PC-3 (cell line): ENCODE measurements at regions of chr10 and their contacts with region 1.

Region 1: GRCh38 chr10:28241741-28242399 is 61.0 kb downstream of the MPP7 start:
- DNase-seq: peak; percentile 76
- ATAC-seq: peak; percentile 92
- H3K4me3 ChIP-seq: no peak overlapping the region
- H3K27ac ChIP-seq: no peak overlapping the region
- H3K4me1 ChIP-seq: peaks cover 14% of the 10 kb centered on the region
- H3K27me3 ChIP-seq: no peaks in the 10 kb centered on the region
- CTCF ChIP-seq: peak; percentile 89

Region 2: GRCh38 chr10:27742195-27743011 is 499.5 kb before region 1 on chr10:
- CTCF ChIA-PET with region 1: no interaction called
- POLR2A ChIA-PET with region 1: no interaction called
- intact Hi-C with region 1: loop called (anchors 5 kb)
- DNase-seq: peak; percentile 75
- ATAC-seq: peak; percentile 48
- H3K4me3 ChIP-seq: peak overlapping the region; percentile 86
- H3K27ac ChIP-seq: peak overlapping the region; percentile 68
- H3K4me1 ChIP-seq: peaks cover 16% of the 10 kb centered on the region; the same call in 1 of the 2 replicates
- H3K27me3 ChIP-seq: peaks cover 16% of the 10 kb centered on the region
- CTCF ChIP-seq: peak; percentile 65

Region 3: DNA sequence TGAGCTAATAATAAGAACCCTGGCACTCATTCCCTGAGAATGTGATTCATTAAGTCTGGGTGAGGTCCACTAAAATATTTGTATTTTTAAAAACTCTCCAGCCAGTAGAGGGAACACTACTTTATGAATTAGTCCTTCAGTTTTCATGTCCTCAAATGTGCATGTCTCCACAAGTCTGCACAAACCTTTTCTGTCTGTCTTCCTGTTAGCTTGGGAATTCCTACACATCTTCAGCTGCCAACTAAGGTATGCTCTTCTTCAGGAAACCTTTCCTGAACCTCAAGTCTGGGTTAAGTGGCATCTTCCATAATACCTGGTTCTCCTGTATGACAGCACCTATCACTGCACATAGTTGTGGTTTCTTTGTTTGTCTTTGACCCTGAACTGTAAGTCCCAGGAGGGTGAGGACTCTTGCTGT is 376.6 kb before region 1 on chr10:
- CTCF ChIA-PET with region 1: no interaction called
- POLR2A ChIA-PET with region 1: no interaction called
- intact Hi-C with region 1: loop called (anchors 10 kb)
- DNase-seq: peak; percentile 52
- ATAC-seq: peak; percentile 60
- H3K4me3 ChIP-seq: no peak overlapping the region
- H3K27ac ChIP-seq: no peak overlapping the region
- H3K4me1 ChIP-seq: peaks cover 13% of the 10 kb centered on the region
- H3K27me3 ChIP-seq: no peaks in the 10 kb centered on the region
- CTCF ChIP-seq: peak; percentile 42

Region 4: DNA sequence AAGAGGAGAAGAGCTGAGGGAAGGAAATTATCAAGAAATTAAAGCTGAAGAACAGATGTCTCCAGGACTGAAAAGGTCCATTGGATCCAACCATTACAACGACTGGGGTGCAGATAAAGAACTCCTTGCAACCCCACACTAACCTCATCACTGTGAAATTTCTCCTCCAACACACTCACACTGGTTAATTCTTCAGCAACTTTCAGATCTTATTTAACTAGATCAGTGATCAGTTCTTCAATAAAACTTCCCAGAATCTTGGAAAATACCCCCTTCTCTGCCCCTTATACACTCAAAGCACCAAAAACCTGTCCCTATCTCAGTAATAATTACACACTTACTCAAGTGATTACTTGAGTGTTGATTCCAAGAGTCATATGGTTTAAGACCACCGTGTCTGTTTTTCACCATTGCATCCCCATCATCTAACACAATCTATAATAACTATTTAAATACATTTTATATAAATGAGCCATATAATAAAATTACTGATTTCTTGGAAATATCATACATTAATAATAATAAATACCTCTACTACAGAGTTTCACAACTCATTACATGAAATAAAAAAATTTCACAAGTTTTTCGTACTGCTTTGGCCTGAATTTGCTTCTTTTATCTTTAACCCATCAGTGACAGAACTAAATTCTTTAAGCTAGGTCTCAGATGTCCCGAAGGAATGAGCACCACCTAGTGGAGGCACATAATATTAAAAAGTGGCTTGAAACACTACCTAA is 62.7 kb before region 1 on chr10:
- CTCF ChIA-PET with region 1: interaction called, 19 read pairs
- POLR2A ChIA-PET with region 1: no interaction called
- intact Hi-C with region 1: loop called (anchors 2 kb)
- DNase-seq: peak; percentile 78
- ATAC-seq: peak; percentile 49; the same call in 1 of the 2 replicates
- H3K4me3 ChIP-seq: no peak overlapping the region
- H3K27ac ChIP-seq: no peak overlapping the region
- H3K4me1 ChIP-seq: peaks cover 25% of the 10 kb centered on the region; the same call in 1 of the 2 replicates
- H3K27me3 ChIP-seq: no peaks in the 10 kb centered on the region
- CTCF ChIP-seq: peak; percentile 74

Region 5: GRCh38 chr10:28280652-28281051 is 38.8 kb after region 1 on chr10:
- CTCF ChIA-PET with region 1: no interaction called
- POLR2A ChIA-PET with region 1: no interaction called
- intact Hi-C with region 1: no loop called
- DNase-seq: no peak
- ATAC-seq: no peak
- H3K4me3 ChIP-seq: no peak overlapping the region
- H3K27ac ChIP-seq: no peak overlapping the region
- H3K4me1 ChIP-seq: peaks cover 3% of the 10 kb centered on the region; the same call in 1 of the 2 replicates
- H3K27me3 ChIP-seq: no peaks in the 10 kb centered on the region
- CTCF ChIP-seq: no peak